AG04449 (cell line): ENCODE measurements at regions of chr5 and their contacts with region 1.

Region 1: DNA sequence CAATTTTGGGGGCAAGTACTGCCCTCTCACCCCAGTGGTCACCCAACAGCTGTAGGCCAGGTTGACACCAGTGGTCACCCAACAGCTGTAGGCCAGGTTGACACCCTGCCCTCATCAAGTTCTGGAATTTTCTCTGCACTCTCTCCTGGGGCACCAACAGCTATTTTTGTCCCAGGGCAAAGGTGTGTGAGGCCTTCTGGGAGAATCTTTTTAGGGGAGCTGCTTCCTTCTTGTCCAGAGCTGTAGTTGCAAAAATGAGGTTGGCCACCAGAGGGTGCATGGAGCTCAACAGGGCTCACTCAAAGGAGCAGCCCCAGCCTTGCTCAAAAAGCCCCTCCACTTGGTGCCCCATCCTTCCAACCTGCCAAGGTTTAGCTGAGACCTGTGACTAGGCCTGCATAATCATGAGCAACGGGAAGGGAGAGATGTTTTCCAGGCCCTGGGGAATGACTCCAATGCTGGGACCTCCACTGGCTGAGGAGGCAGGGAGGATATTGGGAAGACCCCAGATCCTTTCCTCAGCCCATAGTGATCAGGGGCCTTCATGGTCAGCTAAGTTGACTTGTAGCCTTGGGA is 10.6 kb upstream of the P4HA2 start:
- DNase-seq: no peak
- H3K4me3 ChIP-seq: no peak overlapping the region
- CTCF ChIP-seq: peak; percentile 85

Region 2: GRCh38 chr5:132205385-132206125 is 32.7 kb before region 1 on chr5:
- CTCF ChIA-PET with region 1: interaction called, 15 read pairs
- POLR2A ChIA-PET with region 1: no interaction called
- DNase-seq: no peak
- H3K4me3 ChIP-seq: no peak overlapping the region
- CTCF ChIP-seq: no peak

Region 3: DNA sequence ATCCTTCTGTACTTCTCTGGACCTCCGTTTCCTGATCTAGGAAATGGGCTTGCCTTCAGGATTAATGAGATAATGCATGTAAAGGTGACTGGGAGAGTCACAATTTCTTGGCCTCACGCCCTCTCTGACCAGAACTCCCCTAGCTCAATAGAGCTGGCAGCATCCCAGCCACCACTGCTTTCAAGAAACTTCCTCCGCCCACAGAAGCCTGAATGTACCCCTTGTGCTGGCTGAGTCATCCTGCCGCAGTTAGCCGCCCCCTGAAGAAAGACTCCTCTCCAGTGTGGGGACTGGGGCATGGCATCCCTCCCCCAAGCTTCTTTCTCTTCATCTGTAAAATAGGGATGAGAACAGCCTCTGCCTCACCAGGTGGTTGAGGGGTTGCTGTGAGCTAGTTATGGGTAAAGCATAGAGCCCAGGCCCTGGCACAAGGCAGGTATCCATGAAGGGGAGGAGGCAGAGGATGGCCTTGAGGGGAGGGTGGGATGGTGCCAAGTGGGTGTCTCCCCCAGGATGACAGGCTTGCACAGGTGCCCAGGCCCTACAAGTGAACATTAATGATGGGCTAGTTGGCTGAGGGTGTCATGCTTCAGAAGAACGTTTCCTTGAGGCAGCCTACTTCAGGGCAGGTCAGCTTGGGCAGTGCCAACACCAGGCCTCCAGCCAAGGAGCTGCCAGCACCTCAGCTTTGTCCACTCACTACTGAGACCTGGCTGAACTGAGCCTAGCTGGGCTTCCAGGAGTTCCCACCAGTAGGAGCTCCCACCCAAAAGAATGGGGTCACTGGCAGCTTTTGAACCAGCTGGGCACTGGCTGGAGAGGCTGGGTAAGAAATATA is 22.7 kb after region 1 on chr5:
- CTCF ChIA-PET with region 1: interaction called, 416 read pairs
- POLR2A ChIA-PET with region 1: interaction called, 6 read pairs
- DNase-seq: peak; percentile 51
- H3K4me3 ChIP-seq: no peak overlapping the region; the same call in 1 of the 2 replicates
- CTCF ChIP-seq: no peak

Region 4: DNA sequence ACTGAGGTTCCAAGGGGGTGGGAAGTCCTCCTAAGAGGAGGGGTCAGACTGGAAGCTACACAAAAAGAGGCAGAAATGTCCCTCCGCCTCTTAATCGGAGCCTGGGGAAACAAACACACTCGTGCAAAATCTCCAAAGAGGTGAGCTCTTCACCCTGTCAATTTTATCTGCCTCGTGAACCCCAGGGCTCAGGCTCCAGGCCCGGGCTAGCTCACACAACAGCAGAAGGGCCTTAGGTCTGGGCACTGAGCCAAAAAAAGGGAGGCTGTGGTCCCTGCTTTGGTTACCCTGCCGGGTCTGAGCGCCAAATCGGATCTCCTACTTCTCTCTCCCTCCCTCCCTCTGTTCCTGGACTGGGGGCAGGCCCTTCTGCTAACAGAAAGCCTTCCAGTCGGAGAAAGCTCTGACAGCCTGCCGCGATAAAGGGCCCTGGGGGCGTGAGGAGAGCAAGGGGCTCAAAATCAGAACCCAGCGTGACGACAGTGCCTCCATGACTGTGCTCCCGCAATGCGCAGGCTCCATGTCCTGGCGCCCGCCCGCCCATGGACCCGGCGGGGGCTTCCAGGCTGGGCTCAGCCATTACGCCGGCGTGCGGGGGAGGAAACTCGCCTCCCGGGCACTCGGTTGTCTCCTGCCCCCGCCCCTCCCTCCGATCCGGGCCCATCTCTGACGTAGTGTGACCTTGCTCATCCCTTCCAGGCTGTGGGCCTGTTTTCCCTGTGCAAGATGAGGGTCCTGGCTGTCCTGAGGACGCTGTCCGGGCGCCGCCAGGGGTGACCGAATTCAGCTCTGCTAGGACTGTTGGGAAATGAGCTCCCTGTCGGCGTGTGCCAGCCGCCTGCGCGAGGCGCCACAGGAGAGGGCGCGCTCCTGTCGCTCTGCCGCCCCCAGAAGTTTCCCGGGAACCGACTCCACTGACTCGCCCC is 55.1 kb after region 1 on chr5:
- CTCF ChIA-PET with region 1: interaction called, 28 read pairs
- POLR2A ChIA-PET with region 1: interaction called, 6 read pairs
- DNase-seq: peak; percentile 36
- H3K4me3 ChIP-seq: peak overlapping the region; percentile 72
- CTCF ChIP-seq: peak; percentile 22

Region 5: GRCh38 chr5:132334812-132335211 is 96.6 kb after region 1 on chr5:
- CTCF ChIA-PET with region 1: interaction called, 20 read pairs
- POLR2A ChIA-PET with region 1: no interaction called
- DNase-seq: no peak
- H3K4me3 ChIP-seq: no peak overlapping the region
- CTCF ChIP-seq: no peak

Region 6: GRCh38 chr5:132839426-132840301 is 601.4 kb after region 1 on chr5:
- CTCF ChIA-PET with region 1: no interaction called
- POLR2A ChIA-PET with region 1: no interaction called
- DNase-seq: peak; percentile 21
- H3K4me3 ChIP-seq: no peak overlapping the region
- CTCF ChIP-seq: no peak